Activated CD8-positive, alpha-beta T cell treated with anti-CD3 and anti-CD28 coated beads for 36 hours (primary cell): ENCODE measurements at regions of chr19 and their contacts with region 1.

Region 1: GRCh38 chr19:48175578-48175977 is 5.1 kb downstream of the ZSWIM9 start:
- DNase-seq: no peak
- ATAC-seq: no peak
- H3K4me3 Mint-ChIP-seq: no peak overlapping the region
- H3K27ac Mint-ChIP-seq: no peak overlapping the region
- H3K4me1 Mint-ChIP-seq: peaks cover 13% of the 10 kb centered on the region
- H3K27me3 Mint-ChIP-seq: no peaks in the 10 kb centered on the region
- CTCF ChIP-seq: no peak

Region 2: DNA sequence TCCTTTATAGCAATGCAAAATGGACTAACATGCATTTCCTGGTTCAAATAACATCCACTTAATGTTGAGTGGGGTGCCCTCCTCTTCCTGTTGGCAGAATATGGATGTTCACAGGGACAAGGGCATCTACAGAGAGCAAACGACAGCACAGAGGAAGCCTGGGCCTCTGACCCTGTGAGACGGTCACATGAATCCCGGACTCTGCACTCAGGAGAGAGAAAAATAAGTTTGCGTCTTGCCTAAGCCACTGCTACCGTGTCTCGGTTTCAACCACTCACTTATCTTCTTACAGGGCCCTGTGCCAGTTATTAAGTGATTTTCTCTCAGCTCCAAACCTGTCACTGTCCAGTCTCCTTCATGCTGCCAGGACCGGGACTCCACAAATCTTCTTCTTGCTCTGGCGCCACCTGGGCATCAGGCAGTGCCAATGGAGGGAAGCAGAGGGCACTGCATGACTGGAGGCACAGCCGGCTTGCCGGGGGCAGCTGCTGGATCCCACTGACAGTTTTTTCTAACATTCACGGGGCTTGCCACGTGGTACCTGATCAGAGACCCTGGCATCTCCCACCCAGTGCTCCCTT is 17.3 kb before region 1 on chr19:
- CTCF ChIA-PET with region 1: no interaction called
- POLR2A ChIA-PET with region 1: no interaction called
- intact Hi-C with region 1: no loop called
- DNase-seq: no peak
- ATAC-seq: no peak
- H3K4me3 Mint-ChIP-seq: no peak overlapping the region
- H3K27ac Mint-ChIP-seq: no peak overlapping the region
- H3K4me1 Mint-ChIP-seq: no peaks in the 10 kb centered on the region
- H3K27me3 Mint-ChIP-seq: no peaks in the 10 kb centered on the region
- CTCF ChIP-seq: no peak

Region 3: DNA sequence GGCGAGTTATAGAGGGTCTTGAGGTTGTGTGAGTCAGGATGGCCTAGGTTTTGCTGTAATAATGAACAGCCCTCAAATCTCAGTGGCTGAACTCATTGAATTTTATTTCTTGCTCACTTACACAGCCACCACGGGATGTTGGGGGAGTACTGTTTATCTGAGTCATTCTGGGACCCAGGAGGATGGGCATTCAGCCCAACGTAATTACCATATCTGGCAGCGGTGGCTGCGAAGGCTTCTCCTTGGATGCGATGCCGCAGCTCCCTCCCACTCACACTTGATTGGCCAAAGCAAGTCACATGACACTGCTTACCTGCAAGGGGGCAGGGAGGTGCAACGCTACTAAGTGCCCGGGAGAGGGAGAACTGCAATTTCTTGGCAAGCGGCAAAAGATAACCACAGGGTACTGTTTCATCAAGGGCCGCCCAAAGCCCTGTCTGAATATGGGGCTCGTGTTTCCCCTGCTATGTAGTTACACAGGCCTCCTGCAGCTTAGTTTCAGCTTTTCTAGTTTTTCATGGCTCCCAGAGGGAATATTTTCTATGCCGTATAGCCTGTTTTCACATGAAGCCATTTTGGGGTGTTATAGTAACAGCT is 14.8 kb after region 1 on chr19:
- CTCF ChIA-PET with region 1: interaction called, 12 read pairs
- POLR2A ChIA-PET with region 1: interaction called, 9 read pairs
- intact Hi-C with region 1: no loop called
- DNase-seq: peak; percentile 83
- ATAC-seq: peak; percentile 89
- H3K4me3 Mint-ChIP-seq: no peak overlapping the region
- H3K27ac Mint-ChIP-seq: peak overlapping the region; percentile 32
- H3K4me1 Mint-ChIP-seq: peaks cover 11% of the 10 kb centered on the region
- H3K27me3 Mint-ChIP-seq: no peaks in the 10 kb centered on the region
- CTCF ChIP-seq: peak; percentile 28